Ovary (tissue), 10 donors: ENCODE measurements at regions of chrX and their contacts with region 1.

Region 1: GRCh38 chrX:39928704-39929385 is 168.9 kb downstream of the BCOR start:
- DNase-seq: no peak
- H3K4me3 ChIP-seq: no peak overlapping the region
- H3K27ac ChIP-seq: no peak overlapping the region
- H3K4me1 ChIP-seq: no peaks in the 10 kb centered on the region
- H3K27me3 ChIP-seq: no peaks in the 10 kb centered on the region
- CTCF ChIP-seq: no peak
- EP300 ChIP-seq: no peak
- POLR2A ChIP-seq: no peak

Region 2: DNA sequence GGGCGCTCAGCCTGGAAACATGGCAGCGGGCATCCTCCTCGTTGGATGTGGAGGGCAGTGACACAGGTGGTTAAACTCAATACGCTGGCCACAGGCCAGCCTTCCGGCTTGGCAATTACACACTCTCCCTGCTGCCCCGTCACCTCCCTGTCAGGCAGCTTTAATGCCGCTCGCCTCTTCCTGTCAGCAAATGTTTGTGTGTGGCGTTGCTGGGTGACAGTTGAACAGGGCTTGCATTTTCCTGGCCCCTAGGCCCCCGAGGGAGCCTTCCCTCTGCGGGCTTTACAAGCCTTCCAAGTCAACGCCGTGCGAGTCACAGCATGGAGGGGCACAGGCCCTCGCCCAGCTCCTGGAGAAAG is 451.1 kb before region 1 on chrX:
- intact Hi-C with region 1: no loop called
- DNase-seq: peak in 1 of 5 donors; percentile 30
- H3K4me3 ChIP-seq: no peak overlapping the region
- H3K27ac ChIP-seq: no peak overlapping the region
- H3K4me1 ChIP-seq: no peaks in the 10 kb centered on the region
- H3K27me3 ChIP-seq: no peaks in the 10 kb centered on the region
- CTCF ChIP-seq: no peak
- EP300 ChIP-seq: no peak
- POLR2A ChIP-seq: no peak

Region 3: DNA sequence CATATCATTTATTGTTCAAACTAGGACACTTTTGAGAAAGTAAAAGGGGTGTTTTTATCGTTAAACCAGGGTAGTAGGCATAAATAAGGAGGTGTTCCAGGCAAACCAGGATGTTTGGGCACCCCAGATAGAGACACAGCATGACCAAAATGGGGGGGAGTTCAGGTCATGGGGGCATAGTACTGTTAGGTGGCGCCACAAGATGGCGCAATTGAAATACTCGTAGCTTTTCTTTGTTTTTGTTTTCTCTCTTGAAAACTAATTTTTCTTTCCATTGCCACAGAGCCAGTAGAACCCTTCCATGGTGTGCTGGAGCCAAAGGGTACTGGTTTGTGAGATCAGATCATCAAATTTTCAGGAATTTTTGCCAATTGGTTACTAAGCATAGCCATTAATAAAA is 114.5 kb before region 1 on chrX:
- intact Hi-C with region 1: no loop called
- DNase-seq: no peak
- H3K4me3 ChIP-seq: no peak overlapping the region
- H3K27ac ChIP-seq: no peak overlapping the region
- H3K4me1 ChIP-seq: peaks cover 3% of the 10 kb centered on the region
- H3K27me3 ChIP-seq: no peaks in the 10 kb centered on the region
- CTCF ChIP-seq: peak in 1 of 3 donors; percentile 34
- EP300 ChIP-seq: no peak
- POLR2A ChIP-seq: no peak

Region 4: DNA sequence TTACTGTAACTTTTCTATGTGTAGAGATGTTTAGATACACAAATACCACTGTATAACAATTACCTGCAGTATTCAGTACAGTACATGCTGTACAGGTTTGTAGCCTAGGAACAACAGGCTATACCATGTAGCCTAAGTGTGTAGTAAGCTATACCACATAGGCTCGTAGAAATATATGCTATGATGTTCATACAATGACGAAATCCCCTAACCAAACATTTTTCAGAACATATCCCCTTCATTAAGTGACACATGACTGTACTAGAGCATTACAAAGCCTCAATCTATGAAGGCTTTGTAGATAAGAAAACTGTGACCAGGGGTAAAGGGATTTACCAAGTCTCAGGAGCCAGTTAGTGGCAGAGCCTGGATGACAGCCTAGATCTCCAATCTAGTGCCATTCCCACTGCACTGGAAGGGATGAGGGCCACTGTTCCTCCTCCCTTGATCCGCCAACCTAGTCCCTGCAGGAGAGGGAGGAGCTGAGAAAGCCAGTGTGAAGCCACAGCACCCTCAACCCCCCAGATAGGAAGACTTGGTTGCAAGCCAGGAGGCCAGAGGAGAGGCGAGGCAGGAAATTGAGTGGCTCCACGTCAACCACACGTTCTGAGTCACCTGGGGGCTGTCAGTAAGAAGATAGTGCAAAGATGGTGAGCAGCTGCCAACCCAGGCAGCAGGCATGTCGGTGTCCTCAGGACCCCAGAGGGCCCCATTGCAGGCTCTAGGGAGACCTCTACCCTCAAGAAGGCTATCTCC is 58.8 kb before region 1 on chrX:
- intact Hi-C with region 1: no loop called
- DNase-seq: no peak
- H3K4me3 ChIP-seq: no peak overlapping the region
- H3K27ac ChIP-seq: no peak overlapping the region
- H3K4me1 ChIP-seq: no peaks in the 10 kb centered on the region
- H3K27me3 ChIP-seq: no peaks in the 10 kb centered on the region
- CTCF ChIP-seq: no peak
- EP300 ChIP-seq: no peak
- POLR2A ChIP-seq: no peak

Region 5: DNA sequence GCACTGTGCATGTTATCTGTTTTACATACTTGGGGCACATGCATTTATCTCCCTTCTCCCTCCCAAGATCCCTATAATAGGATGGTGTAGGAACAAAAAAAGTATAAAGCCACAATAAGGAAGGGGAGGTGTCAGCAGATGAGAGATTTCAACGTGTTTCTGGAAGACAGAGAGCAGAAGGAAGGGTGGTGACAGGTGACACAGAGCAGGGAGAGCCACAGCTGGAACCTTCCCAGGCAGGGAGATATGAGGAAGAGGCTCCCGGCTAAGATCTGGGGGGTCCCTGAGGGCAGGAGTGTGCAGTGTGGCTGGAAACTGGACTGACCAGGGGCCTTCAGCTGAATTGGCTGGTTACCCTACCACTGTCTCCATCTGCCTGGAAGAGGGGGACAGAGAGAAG is 61.5 kb after region 1 on chrX:
- intact Hi-C with region 1: loop called in 1 of 4 experiments (anchors 5 kb)
- DNase-seq: no peak
- H3K4me3 ChIP-seq: no peak overlapping the region
- H3K27ac ChIP-seq: no peak overlapping the region
- H3K4me1 ChIP-seq: peaks cover 2% of the 10 kb centered on the region
- H3K27me3 ChIP-seq: no peaks in the 10 kb centered on the region
- CTCF ChIP-seq: no peak
- EP300 ChIP-seq: no peak
- POLR2A ChIP-seq: no peak